PC-9 (cell line): ENCODE measurements at regions of chr14 and their contacts with region 1.

Region 1: DNA sequence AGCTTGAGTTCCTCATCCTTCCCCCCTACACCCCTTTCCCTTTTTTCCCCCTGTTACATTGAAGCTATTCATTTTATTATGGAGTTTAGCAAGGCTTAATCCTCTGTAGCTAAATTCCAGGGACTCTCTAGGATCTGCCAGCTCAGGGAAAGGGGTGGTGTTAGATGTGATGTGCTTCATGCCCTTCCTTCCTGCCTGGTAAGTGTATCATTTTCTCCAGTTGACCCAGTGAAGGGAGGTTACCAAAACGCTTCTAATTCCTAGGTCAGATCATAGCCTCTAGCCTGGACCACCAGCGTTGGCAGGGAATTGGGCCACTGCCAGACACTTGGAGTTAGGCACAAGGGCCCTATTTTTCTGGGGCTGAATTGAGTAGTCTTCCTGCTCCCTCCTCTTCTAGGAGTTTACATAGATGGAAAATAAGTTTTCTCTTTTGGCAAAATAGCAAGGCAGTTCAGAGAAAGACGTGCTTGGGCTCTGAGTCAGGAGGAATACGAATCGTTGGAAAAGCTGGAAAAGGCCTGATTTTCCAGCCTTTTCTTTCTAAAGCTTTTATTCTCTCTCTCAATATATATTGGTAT is 88.3 kb downstream of the NPAS3 start:
- DNase-seq: no peak
- H3K4me3 ChIP-seq: no peak overlapping the region
- H3K27ac ChIP-seq: no peak overlapping the region
- H3K4me1 ChIP-seq: no peaks in the 10 kb centered on the region
- H3K27me3 ChIP-seq: no peaks in the 10 kb centered on the region
- CTCF ChIP-seq: no peak

Region 2: DNA sequence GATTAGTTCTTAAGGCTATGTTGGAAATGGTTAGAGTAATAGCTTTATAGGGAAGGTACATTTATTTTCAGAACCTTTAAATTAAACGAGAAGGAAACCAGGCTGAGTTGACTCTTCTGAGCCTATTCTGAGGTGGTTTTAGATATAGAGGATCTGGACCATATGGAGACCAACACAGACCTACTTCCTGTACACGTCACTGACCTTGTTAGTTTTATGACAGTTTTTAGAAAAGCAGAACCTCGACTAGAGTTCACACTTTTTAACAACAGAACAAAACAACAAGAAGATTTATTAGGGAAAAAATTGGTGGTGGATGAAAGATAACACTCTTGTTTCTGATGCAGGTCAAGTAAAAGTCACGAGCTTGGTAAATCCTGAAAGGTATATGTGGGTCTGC is 18.8 kb after region 1 on chr14:
- CTCF ChIA-PET with region 1: no interaction called
- POLR2A ChIA-PET with region 1: interaction called, 11 read pairs
- intact Hi-C with region 1: no loop called
- DNase-seq: no peak
- H3K4me3 ChIP-seq: no peak overlapping the region
- H3K27ac ChIP-seq: no peak overlapping the region
- H3K4me1 ChIP-seq: no peaks in the 10 kb centered on the region
- H3K27me3 ChIP-seq: no peaks in the 10 kb centered on the region
- CTCF ChIP-seq: no peak